Activated CD4-positive, alpha-beta T cell treated with anti-CD3 and anti-CD28 coated beads for 36 hours (primary cell): ENCODE measurements at regions of chr10 and their contacts with region 1.

Region 1: GRCh38 chr10:110610308-110610774 is 33.8 kb upstream of the RBM20 start:
- DNase-seq: peak; percentile 72
- ATAC-seq: peak; percentile 16
- H3K4me3 Mint-ChIP-seq: no peak overlapping the region
- H3K27ac Mint-ChIP-seq: no peak overlapping the region
- H3K4me1 Mint-ChIP-seq: peaks cover 38% of the 10 kb centered on the region
- H3K27me3 Mint-ChIP-seq: no peaks in the 10 kb centered on the region

Region 2: GRCh38 chr10:110671788-110672579 is 61.6 kb after region 1 on chr10:
- CTCF ChIA-PET with region 1: interaction called, 33 read pairs
- POLR2A ChIA-PET with region 1: no interaction called
- intact Hi-C with region 1: loop called (anchors 1 to 2 kb)
- DNase-seq: peak; percentile 86
- ATAC-seq: peak; percentile 98
- H3K4me3 Mint-ChIP-seq: peak overlapping the region; percentile 76
- H3K27ac Mint-ChIP-seq: peak overlapping the region; percentile 71
- H3K4me1 Mint-ChIP-seq: peaks cover 3% of the 10 kb centered on the region
- H3K27me3 Mint-ChIP-seq: no peaks in the 10 kb centered on the region

Region 3: DNA sequence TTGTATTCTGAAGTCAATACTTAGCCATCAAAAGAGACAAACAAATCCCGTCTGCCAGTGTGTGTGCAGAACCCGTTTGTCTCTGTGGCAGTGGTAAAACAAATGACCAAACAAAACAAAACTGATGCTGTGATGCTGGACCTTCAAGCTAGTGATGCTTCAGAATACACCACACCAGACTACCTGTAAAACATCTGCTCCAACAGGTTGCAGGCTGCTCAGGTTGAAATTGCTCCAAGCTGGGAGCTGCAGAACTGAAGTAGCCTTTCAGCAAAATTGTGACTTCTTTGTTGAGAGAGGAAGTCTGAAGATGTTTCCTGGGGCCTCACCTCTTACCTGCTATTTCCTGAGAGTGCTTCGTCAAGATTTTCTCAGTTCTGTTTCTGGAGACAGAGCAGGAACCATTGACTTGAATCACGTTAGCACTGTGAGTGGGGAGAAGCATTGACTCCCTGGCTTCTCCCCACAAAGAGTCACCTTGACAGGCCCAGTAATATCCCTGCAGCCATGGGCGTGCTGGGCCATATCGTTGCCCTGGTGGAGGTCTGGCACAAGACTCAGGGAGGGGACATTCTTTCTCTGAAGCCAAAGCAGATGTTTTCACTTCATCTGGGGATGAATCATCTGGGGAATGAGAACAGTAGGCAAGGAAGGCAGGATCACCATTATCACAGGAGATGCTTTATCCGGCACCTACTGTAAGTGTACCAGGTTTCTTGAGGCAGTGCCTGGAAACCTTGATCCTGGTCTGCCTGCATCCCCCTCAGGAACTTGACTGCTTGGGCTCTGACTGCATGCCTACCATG is 114.0 kb after region 1 on chr10:
- CTCF ChIA-PET with region 1: no interaction called
- POLR2A ChIA-PET with region 1: no interaction called
- intact Hi-C with region 1: loop called (anchors 5 kb)
- DNase-seq: peak; percentile 26
- ATAC-seq: peak; percentile 72
- H3K4me3 Mint-ChIP-seq: no peak overlapping the region
- H3K27ac Mint-ChIP-seq: no peak overlapping the region
- H3K4me1 Mint-ChIP-seq: peaks cover 39% of the 10 kb centered on the region
- H3K27me3 Mint-ChIP-seq: no peaks in the 10 kb centered on the region

Region 4: GRCh38 chr10:110893559-110894179 is 283.3 kb after region 1 on chr10:
- CTCF ChIA-PET with region 1: interaction called, 6 read pairs
- POLR2A ChIA-PET with region 1: no interaction called
- intact Hi-C with region 1: loop called (anchors 2 to 5 kb)
- DNase-seq: no peak
- ATAC-seq: peak; percentile 87
- H3K4me3 Mint-ChIP-seq: no peak overlapping the region
- H3K27ac Mint-ChIP-seq: no peak overlapping the region
- H3K4me1 Mint-ChIP-seq: peaks cover 33% of the 10 kb centered on the region
- H3K27me3 Mint-ChIP-seq: no peaks in the 10 kb centered on the region

Region 5: GRCh38 chr10:111344804-111345203 is 734.5 kb after region 1 on chr10:
- CTCF ChIA-PET with region 1: no interaction called
- POLR2A ChIA-PET with region 1: no interaction called
- intact Hi-C with region 1: no loop called
- DNase-seq: no peak
- ATAC-seq: no peak
- H3K4me3 Mint-ChIP-seq: no peak overlapping the region
- H3K27ac Mint-ChIP-seq: no peak overlapping the region
- H3K4me1 Mint-ChIP-seq: no peaks in the 10 kb centered on the region
- H3K27me3 Mint-ChIP-seq: peaks cover 6% of the 10 kb centered on the region

Region 6: GRCh38 chr10:111598436-111599059 is 988.2 kb after region 1 on chr10:
- CTCF ChIA-PET with region 1: no interaction called
- POLR2A ChIA-PET with region 1: no interaction called
- intact Hi-C with region 1: loop called (anchors 2 to 5 kb)
- DNase-seq: peak; percentile 64
- ATAC-seq: peak; percentile 47
- H3K4me3 Mint-ChIP-seq: no peak overlapping the region
- H3K27ac Mint-ChIP-seq: no peak overlapping the region
- H3K4me1 Mint-ChIP-seq: no peaks in the 10 kb centered on the region
- H3K27me3 Mint-ChIP-seq: peaks cover 4% of the 10 kb centered on the region